ENCODE measurements at regions of chr17 and their contacts with region 1.

Region 1: GRCh38 chr17:60231234-60231633 is 81.5 kb downstream of the CA4 start:
- DNase-seq: no peak
- H3K4me3 ChIP-seq: no peak overlapping the region
- CTCF ChIP-seq: peak; percentile 32

Region 2: DNA sequence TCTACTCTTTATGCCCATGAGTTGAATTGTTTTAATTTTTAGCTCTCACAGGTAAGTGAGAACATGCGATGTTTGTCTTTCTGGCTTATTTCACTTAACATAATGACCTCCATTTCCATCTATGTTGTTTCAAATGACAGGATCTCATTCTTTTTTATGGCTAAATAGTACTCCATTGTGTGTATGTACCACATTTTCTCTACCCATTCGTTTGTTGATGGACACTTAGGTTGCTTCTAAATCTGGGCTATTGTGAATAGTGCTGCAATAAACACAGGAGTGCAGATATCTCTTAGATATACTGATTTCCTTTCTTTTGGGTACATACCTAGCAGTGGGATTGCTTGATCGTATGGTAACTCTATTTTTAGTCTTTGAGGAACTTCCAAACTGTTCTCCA is 100.8 kb before region 1 on chr17:
- CTCF ChIA-PET with region 1: no interaction called
- POLR2A ChIA-PET with region 1: no interaction called
- DNase-seq: no peak
- H3K4me3 ChIP-seq: no peak overlapping the region
- CTCF ChIP-seq: no peak

Region 3: DNA sequence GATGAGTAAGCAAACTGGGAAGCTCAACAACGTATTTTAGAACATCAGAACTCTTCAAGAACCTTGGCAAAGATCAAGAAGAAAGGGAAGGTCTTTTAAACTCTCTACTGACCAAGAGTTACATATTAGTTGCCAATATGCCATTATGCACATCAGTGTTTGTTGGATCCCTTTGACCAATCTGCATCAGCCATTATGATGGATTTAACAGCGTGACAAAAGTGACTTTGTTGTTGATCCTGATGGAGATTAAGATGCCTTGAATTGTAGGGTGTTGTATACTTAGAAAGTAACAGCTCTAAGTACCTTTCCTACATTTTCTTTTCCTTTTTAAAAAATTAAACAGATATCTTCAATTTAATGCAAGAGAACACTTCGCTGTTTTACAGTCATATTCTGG is 27.1 kb after region 1 on chr17:
- CTCF ChIA-PET with region 1: interaction called, 10 read pairs
- POLR2A ChIA-PET with region 1: no interaction called
- DNase-seq: no peak
- H3K4me3 ChIP-seq: no peak overlapping the region
- CTCF ChIP-seq: no peak

Region 4: DNA sequence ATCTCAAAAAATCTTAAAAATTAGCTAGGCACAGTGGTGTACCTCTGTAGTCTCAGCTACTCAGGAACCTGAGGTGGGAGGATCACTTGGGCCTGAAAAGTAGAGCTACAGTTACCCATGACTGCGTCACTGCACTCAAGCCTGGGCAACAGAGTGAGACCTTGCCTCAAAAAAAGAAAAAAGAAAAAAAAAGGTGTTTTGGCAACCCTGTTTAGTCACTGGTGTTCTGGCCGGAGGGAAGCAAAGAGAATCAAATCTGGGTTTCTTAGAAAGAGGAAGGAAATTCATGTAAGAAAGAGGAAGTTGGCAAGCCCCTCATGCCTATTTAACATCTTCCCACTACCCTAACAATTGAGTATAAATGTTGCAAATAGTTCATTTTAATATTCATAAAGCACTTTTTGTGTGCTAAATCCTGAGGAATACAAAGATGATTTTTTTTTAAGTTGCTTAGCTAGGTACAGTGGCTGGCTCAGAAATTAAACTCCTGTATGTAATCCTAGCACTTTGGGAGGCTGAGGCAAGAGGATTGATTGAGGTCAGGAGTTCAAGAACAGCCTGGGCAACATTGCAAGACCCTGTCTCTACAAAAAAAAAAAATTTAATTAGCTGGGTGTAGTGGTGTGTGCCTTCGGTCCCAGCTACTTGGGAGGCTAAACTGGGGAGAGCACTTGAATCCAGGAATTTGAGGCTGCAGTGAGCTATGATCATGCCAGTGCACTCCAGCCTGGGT is 167.2 kb after region 1 on chr17:
- CTCF ChIA-PET with region 1: interaction called, 11 read pairs
- POLR2A ChIA-PET with region 1: no interaction called
- DNase-seq: no peak
- H3K4me3 ChIP-seq: no peak overlapping the region
- CTCF ChIP-seq: no peak

Measured in AG04449 (cell line).